AG04450 (cell line): ENCODE measurements at regions of chr13 and their contacts with region 1.

Region 1: GRCh38 chr13:38735721-38736440 is 49.0 kb downstream of the FREM2 start:
- DNase-seq: no peak
- H3K4me3 ChIP-seq: no peak overlapping the region
- H3K27ac ChIP-seq: no peak overlapping the region
- H3K27me3 ChIP-seq: no peaks in the 10 kb centered on the region
- CTCF ChIP-seq: no peak

Region 2: DNA sequence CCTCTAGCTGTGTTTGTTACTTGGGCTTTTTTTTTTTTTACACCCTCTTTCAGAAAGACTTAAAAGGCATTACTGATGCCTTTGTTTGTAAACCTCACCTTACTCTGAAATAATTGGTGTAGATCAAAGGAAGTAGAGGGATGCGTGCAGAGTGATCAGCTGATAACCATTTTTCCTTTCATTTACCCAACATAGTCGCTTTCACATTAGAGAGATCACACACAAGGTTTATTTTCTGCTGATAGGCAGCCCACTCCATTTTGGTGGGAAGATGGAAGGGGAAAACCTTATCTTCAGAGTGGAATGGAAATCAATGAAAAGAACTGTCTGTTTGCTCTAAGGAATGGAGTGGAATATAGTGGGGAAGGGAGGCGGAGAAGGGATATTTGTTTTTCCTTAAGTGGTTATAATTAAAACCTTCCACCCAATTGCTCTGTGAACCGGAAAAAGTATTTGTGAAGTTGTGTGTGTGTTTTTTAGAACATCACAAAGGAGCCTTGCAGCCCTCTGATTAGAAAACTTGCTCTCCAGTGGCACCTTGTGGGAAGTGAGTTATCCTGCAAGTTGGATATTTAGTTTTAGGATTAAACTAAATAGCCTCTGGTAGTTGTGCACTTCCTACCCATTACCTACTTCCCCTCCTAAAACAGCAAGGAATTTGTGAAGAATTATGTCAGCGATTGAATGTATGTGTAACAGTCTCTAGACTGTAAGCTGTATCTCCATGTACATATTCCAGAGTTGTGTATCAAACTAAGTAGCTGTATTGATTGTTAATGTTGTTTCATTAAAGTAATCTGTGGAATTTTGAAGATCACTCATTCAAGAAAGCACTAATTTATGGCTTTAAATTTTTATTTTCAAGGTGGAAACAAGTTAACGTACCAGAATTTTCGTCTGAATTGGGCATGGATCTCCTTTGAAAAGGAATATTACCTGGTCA is 27.8 kb after region 1 on chr13:
- CTCF ChIA-PET with region 1: interaction called, 10 read pairs
- POLR2A ChIA-PET with region 1: no interaction called
- DNase-seq: no peak
- H3K4me3 ChIP-seq: no peak overlapping the region
- H3K27ac ChIP-seq: no peak overlapping the region
- H3K27me3 ChIP-seq: no peaks in the 10 kb centered on the region
- CTCF ChIP-seq: peak; percentile 71